ENCODE measurements at regions of chr13 and their contacts with region 1.

Region 1: GRCh38 chr13:102394158-102395053 is 7.4 kb downstream of the FGF14 start:
- DNase-seq: peak; percentile 93
- H3K4me3 Mint-ChIP-seq: peak overlapping the region; percentile 87
- H3K27ac Mint-ChIP-seq: peak overlapping the region; percentile 92
- H3K4me1 Mint-ChIP-seq: peaks cover 30% of the 10 kb centered on the region
- H3K27me3 Mint-ChIP-seq: peaks cover 25% of the 10 kb centered on the region

Region 2: DNA sequence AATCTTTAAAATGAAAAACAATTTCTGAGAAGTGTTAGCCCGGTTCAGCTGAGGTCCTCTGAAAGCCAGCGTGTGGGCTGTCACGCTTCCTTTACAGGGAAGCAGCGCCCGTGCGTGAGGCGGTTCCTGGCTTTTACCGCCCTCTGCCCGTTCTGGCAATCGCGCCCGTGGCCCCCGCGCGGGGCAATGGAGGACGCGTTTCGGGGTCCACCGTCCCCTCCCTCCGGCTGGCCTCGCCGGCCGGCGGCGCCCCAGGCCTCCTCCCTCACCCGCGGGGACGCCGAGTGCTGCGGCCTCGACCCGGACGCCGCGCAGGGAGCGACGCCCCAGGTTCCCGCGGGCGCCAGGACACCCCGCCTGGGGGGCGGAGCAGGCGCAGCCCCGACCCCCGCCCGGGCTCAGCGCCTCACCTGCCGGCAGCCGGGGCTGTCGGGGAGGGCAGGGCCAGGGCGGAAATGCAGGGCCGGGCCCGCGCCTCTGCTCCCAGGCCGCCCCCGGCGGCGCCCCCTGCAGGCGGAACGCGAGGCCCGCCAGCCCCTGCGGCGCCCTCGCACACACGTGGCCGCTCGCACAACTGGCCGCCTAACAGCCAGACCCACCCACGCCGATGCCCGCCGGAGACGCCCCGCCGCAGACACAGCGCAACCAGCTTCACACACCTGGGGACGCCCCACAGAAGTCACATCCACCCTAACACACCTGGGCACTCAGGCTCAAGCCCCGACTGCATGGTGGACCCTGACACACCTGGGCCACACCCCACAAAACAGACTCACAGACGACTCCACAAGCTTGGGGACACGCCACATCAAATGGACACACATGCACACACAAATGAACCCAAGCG is 1805.9 kb before region 1 on chr13 and contains the start of gene GGACT:
- intact Hi-C with region 1: loop called (anchors 10 kb)
- DNase-seq: peak; percentile 79
- H3K4me3 Mint-ChIP-seq: peak within 1 kb of the TSS; percentile 87
- H3K27ac Mint-ChIP-seq: peak within 1 kb of the TSS; percentile 94
- H3K4me1 Mint-ChIP-seq: peaks cover 57% of the 10 kb centered on the region
- H3K27me3 Mint-ChIP-seq: no peaks in the 10 kb centered on the region
- total RNA-seq, gene GGACT: 4.0 and 7.2 TPM in 2 replicates

Region 3: DNA sequence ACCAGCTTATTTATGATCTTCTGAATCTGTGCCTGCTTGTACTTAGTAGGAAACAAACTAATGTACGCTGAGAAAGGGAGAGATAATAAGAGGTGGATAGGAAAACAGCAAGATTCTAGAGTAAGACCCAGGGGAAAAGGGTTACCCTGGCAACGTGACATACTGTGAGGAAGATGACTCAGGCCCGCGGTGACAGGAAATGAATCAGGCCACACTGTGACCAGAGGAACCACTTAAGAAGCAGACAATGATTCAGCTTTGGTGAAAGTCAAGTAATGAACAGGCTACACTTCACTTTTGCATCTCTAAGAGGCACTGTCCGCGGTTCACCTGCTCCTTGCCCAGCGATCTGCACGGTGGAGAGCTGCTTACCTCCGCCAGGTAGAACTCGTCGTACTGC is 1136.3 kb before region 1 on chr13:
- intact Hi-C with region 1: loop called (anchors 10 kb)
- DNase-seq: peak; percentile 40
- H3K4me3 Mint-ChIP-seq: no peak overlapping the region
- H3K27ac Mint-ChIP-seq: peak overlapping the region; percentile 1
- H3K4me1 Mint-ChIP-seq: peaks cover 10% of the 10 kb centered on the region
- H3K27me3 Mint-ChIP-seq: peaks cover 9% of the 10 kb centered on the region

Region 4: DNA sequence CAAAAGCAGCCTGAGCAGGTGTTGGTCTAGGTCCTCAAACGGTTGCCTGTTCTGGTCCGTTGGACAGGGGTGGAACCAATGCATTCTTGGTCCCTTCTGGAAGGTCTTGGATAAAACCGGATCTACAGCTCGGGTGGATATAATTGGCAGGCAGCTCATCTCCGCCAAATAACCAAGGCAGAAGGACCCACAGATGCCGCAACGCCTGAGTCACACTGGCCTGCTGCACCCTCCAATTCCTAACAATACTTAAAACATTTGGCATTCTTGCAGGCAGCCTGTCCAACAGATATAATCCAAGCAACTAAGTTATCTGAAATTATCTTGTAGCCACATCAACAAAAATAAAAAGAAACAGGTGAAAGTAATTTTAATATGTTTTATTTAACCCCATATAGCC is 66.4 kb after region 1 on chr13:
- intact Hi-C with region 1: loop called (anchors 2 kb)
- DNase-seq: no peak
- H3K4me3 Mint-ChIP-seq: no peak overlapping the region
- H3K27ac Mint-ChIP-seq: no peak overlapping the region
- H3K4me1 Mint-ChIP-seq: peaks cover 5% of the 10 kb centered on the region
- H3K27me3 Mint-ChIP-seq: peaks cover 5% of the 10 kb centered on the region

Region 5: DNA sequence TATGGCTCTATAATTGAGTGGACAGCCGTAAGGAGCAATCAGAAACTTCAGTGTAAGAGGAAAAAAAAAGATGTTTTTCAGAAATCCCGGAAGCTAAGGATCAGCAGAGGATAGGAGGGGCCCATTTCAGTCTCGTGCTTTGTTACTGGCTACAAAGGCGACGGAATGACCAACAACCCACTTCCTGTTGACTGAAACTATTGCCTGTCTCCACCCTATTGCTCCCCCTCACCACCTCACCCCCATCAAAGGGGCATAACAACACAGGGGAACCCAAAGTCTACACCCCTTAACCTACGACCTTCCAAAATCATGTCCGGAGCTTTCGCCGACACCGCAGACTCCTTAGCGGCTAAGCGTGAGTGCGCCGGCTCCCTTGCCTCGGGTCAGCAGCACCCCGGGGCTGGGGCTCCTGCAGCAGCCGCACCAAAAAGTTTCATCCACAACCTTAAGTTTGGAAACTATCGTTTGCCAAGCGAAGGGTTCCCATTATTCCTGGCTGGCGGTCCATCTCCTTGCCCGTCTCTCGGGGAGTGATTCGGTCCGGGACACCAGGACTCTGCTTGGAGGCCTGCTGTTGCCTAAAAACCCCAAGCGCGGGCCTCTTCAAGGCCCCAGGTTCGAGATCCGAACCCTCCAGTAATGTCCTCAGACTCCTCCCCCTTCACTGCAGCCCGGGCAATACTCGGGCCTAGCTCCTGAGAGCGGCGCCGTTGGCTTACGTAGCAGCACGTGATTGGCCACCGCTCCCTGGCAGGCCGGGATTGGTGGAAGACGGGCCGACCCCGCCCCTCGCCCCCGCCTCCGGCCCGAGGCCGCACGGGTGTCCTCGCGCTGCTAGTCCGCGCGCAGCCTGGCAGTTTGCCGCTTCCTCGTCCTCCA is 202.0 kb after region 1 on chr13 and contains the start of gene TPP2:
- intact Hi-C with region 1: loop called (anchors 1 kb)
- DNase-seq: peak; percentile 98
- H3K4me3 Mint-ChIP-seq: peak within 1 kb of the TSS; percentile 95
- H3K27ac Mint-ChIP-seq: peak within 1 kb of the TSS; percentile 97
- H3K4me1 Mint-ChIP-seq: peaks cover 72% of the 10 kb centered on the region
- H3K27me3 Mint-ChIP-seq: no peaks in the 10 kb centered on the region
- total RNA-seq, gene TPP2: 77.0 and 78.9 TPM in 2 replicates

Region 6: DNA sequence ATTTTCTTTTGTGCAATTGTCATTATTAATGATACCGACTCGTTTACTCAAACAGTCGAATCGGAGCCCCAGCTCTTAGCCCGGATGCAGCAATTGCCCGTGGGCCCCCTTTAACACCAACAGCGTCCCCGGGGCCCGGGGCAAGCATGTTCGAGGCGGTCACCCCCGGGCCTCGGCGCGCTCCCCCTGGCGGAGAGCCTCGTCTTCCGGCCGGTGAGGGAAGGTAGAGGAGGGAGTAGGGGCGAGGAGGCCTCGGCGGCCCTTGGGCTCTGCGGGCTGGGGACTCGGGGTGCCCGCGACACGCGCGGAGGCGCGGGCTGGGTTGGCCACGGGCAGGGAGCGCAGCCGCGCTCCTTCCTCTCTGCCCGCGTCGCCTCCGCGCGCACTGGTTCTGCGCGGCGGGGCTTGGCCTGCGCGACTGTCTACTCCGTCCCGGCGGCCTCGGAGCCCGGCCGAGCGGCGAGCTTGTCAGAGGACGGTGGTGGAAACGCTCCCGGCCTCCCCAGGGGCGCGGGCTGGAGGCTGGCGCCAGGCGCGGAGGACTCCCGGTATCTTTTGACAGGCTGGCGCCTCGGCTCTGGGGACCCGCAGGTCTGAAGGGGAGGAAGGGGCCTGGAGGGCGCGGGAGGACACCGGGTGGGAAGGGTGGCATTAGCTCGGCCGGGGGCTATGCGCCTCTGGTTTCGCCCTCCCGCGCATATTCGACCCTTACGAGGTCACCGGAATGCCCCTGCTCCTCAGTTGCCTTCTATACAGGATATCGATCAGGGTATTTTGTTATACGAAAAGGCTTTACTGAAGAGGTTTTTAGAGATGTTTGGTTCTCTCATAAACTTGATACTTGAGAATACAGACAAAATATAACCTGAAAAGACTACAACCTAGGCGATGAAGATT is 406.0 kb after region 1 on chr13:
- intact Hi-C with region 1: loop called (anchors 5 kb)
- DNase-seq: peak; percentile 83
- H3K4me3 Mint-ChIP-seq: peak overlapping the region; percentile 97
- H3K27ac Mint-ChIP-seq: peak overlapping the region; percentile 91
- H3K4me1 Mint-ChIP-seq: peaks cover 43% of the 10 kb centered on the region
- H3K27me3 Mint-ChIP-seq: no peaks in the 10 kb centered on the region

Region 7: GRCh38 chr13:102870677-102871415 is 476.4 kb after region 1 on chr13:
- intact Hi-C with region 1: loop called (anchors 2 kb)
- DNase-seq: peak; percentile 17
- H3K4me3 Mint-ChIP-seq: no peak overlapping the region
- H3K27ac Mint-ChIP-seq: peak overlapping the region; percentile 13
- H3K4me1 Mint-ChIP-seq: peaks cover 21% of the 10 kb centered on the region
- H3K27me3 Mint-ChIP-seq: no peaks in the 10 kb centered on the region